MCF 10A (cell line): ENCODE measurements at regions of chr7 and their contacts with region 1.

Region 1: DNA sequence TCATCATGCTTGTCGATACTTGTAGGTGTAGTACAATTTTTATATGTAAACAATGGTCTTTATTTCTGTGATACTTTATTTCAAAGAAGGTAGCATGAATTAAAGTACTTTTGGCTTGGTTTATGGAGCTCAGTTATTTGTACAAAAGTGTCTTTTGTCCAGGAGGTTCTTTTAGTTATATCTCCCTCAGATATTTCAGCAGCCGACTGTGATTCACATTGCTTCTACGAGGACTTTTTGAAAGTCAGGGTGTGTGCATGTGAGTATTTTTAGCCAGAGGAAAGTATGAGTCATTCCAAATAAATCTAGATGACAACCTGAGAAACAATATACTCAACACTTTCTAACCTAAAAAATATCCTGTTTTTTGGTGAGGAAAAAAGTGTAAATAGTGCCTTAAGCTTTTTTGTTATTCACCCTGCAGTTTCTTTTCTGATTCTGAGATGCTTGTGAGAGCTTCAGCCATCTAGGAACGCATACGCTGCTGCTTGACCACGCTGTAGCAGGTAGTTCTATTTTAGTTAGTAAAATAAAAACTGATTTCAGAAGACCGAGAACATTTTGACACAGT is 595 bp upstream of the SUN1 start:
- DNase-seq: peak; percentile 93
- H3K4me3 Mint-ChIP-seq: peak overlapping the region; percentile 66
- H3K27ac Mint-ChIP-seq: peak overlapping the region; percentile 100
- H3K4me1 Mint-ChIP-seq: peaks cover 34% of the 10 kb centered on the region
- H3K27me3 Mint-ChIP-seq: no peaks in the 10 kb centered on the region
- CTCF ChIP-seq: no peak

Region 2: DNA sequence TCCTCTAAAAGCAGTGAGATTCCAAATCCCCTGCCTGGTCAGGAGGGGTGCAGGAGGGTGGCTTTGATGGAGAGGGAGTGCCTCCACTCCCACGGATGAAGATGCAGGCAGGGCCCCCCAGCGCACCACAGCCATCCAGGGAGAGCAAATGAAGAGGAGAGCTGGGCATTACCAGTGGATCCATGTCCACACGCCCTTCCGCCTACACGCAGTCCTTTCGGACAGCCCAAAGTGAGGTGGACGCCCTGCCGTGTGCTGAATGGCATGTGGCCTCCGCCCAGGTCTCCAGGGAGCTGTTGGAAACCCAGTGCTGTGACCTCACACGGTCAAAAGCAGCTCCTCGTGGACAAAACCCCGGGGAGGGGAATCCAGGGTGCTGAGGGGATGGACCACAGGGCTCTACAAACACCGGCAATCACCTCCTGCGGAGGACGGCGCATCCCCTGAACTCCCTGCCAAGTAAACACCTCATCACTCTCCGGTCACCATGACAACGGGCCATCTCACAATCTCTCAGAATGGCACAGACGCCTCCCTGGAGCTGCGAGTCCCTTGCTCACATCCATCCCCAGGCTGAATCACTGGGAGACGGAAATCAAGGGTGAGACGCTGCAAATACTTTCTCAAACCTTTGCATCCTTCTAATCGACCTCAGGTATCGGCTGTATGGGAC is 140.2 kb before region 1 on chr7:
- CTCF ChIA-PET with region 1: no interaction called
- POLR2A ChIA-PET with region 1: no interaction called
- intact Hi-C with region 1: no loop called
- DNase-seq: no peak
- H3K4me3 Mint-ChIP-seq: no peak overlapping the region
- H3K27ac Mint-ChIP-seq: no peak overlapping the region
- H3K4me1 Mint-ChIP-seq: no peaks in the 10 kb centered on the region
- H3K27me3 Mint-ChIP-seq: no peaks in the 10 kb centered on the region
- CTCF ChIP-seq: no peak

Region 3: DNA sequence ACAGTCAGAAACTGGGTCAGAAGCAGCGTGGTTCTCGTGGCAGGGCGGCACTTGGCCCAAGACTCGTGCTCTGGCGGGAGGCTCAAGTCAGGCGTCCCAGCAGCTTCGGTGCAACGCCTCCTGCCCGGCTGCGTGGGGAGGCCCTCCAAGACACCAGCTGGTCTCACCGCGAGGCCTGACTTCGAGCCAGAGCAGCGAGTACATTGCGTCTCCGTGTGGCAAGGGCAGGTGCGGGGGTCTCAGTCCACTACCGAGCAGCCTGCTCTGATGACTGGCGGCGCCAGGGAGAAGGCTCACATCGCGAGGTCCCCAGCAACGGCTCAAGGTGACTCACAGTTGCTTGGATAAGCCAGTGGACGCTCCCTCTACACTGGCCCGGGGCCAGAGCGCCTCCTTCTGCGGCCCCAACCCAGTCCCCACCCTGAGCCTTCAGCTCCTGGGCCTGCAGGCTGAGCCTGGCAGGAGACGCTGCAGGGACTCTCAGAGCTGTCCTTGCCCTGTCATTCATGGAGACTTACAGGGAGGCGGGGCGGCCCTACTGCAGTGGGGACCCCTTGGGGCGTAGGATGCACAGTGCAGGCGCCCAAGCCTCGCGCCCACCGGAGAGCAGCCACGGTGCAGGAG is 62.7 kb before region 1 on chr7:
- CTCF ChIA-PET with region 1: no interaction called
- POLR2A ChIA-PET with region 1: interaction called, 18 read pairs
- intact Hi-C with region 1: no loop called
- DNase-seq: no peak
- H3K4me3 Mint-ChIP-seq: peak overlapping the region; percentile 79
- H3K27ac Mint-ChIP-seq: no peak overlapping the region
- H3K4me1 Mint-ChIP-seq: no peaks in the 10 kb centered on the region
- H3K27me3 Mint-ChIP-seq: no peaks in the 10 kb centered on the region
- CTCF ChIP-seq: no peak

Region 4: DNA sequence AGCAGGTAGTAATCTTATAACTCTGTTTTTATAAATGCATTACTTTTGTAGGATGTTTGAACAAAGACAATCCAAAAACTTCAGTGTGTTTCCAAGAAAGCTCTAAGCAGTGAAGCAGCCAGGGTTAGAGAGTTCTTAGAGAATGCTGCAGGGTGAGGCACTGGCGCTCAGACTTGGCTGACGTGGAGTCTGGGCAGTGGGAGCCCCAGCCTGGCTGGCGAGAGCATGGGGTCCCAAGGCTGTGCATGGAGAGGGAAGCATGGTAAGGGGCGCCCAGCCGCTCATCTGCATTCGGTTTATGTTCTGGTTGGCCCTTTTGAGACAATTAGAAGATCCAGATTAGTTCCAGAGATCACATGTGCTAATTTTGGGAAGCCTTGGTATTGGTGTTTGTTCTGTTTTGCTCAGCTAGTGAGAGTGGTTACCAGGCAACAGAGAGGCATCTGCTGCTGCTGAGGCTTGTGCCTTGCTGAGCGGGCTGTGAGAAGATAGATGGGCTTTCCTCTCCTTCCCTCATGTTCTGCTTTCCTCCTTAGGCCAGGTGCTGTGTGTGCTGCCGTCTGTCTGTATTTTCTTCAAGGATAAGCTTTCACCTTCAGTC is 10.8 kb after region 1 on chr7:
- CTCF ChIA-PET with region 1: interaction called, 6 read pairs
- POLR2A ChIA-PET with region 1: interaction called, 14 read pairs
- intact Hi-C with region 1: no loop called
- DNase-seq: no peak
- H3K4me3 Mint-ChIP-seq: no peak overlapping the region
- H3K27ac Mint-ChIP-seq: peak overlapping the region; percentile 58
- H3K4me1 Mint-ChIP-seq: peaks cover 2% of the 10 kb centered on the region
- H3K27me3 Mint-ChIP-seq: no peaks in the 10 kb centered on the region
- CTCF ChIP-seq: no peak

Region 5: DNA sequence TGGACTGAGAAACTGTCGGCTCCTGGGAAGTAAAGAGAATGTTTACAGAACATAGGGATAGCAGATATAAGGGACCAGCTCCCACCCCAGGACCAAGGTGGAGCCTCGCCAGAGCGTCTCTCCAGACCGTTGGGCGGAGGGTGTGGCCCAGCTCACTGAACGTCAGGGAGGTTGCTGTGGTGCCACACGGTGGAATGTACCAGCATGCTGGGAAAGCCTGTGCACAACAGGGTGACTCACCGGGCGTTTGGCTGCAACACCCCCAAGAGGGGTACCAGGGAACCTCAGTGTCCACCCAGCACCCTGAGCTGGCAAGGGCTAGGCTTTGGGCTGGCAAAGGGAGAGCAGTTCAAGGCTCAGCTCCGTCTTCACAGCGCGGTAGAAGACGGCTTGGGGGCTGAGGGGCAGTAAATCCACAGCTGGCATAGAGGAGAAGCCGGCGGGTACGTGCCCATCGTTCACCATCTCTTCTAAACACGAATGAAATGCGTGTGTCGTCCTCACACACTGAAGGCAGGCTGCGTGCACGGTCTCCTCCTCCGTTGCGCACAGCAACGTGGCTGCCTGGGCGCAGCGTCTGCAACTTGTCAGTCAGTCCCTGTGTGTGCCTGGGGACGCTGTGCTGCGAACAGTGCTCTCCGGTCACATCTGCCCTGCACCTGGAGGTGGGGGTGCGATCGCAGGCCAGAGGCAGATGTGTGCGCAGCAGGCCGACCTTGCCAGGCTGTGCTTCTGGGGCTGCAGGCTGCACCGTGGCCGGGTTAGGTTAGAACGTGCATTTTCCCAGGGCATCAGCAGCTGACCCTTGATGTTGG is 36.2 kb after region 1 on chr7:
- CTCF ChIA-PET with region 1: interaction called, 39 read pairs
- POLR2A ChIA-PET with region 1: interaction called, 31 read pairs
- intact Hi-C with region 1: loop called (anchors 1 kb)
- DNase-seq: peak; percentile 78
- H3K4me3 Mint-ChIP-seq: peak overlapping the region; percentile 22
- H3K27ac Mint-ChIP-seq: peak overlapping the region; percentile 89
- H3K4me1 Mint-ChIP-seq: peaks cover 7% of the 10 kb centered on the region
- H3K27me3 Mint-ChIP-seq: no peaks in the 10 kb centered on the region
- CTCF ChIP-seq: no peak

Region 6: DNA sequence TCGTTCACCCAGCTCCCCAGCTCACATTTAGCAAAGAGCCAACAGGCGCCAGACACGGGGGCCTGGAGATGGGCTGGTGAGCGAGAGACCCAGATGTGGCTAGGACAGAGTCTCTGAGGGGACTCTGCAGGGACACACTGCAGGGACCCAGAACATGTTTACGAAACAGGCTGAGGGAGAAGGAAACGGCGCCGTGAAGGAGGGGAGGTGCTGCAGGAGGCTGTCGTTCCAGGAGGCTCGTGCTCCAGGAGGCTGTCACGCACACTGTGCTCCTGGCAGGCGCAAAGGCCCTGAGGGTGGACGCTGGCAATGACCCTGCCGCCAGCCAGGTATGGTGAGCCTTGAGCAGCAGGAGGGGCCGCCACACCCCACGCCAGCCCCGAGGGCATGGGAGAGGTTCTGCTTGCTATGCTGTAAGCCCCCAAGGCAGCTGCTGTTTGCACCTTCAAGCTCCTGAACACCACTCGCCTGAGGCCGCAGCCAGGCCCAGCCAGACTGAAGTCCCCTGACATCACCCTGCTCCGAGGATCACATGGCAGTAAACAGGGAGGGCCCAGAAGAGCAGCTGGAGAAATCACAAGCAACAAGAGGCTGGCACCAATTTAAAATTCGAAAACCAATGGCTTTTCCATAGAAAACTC is 95.5 kb after region 1 on chr7:
- CTCF ChIA-PET with region 1: no interaction called
- POLR2A ChIA-PET with region 1: no interaction called
- intact Hi-C with region 1: no loop called
- DNase-seq: no peak
- H3K4me3 Mint-ChIP-seq: no peak overlapping the region
- H3K27ac Mint-ChIP-seq: no peak overlapping the region
- H3K4me1 Mint-ChIP-seq: no peaks in the 10 kb centered on the region
- H3K27me3 Mint-ChIP-seq: no peaks in the 10 kb centered on the region
- CTCF ChIP-seq: no peak